ENCODE measurements at regions of chr7 and their contacts with region 1.

Region 1: DNA sequence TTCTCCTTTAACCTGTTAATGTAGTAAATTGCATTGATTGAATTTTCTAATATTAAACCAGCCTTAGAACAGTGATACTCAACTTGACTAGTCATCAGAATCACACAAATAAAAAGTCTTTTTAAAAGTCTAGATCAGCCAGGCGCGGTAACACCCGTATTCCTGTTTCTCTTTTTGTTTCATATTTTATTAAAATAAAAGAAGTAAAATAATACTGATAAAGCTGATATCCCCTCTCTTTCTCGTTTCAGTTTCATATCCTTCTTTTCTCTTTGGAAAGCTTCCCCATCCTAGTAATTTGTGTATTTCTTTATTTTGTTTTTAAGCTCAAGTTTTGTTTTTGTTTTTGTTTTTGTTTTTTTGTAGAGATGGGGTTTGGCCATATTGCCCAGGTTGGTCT is 9.3 kb downstream of the SMO start:
- DNase-seq: no peak
- H3K4me3 ChIP-seq: no peak overlapping the region
- H3K27ac ChIP-seq: no peak overlapping the region
- H3K4me1 ChIP-seq: no peaks in the 10 kb centered on the region
- H3K27me3 ChIP-seq: no peaks in the 10 kb centered on the region
- CTCF ChIP-seq: no peak

Region 2: DNA sequence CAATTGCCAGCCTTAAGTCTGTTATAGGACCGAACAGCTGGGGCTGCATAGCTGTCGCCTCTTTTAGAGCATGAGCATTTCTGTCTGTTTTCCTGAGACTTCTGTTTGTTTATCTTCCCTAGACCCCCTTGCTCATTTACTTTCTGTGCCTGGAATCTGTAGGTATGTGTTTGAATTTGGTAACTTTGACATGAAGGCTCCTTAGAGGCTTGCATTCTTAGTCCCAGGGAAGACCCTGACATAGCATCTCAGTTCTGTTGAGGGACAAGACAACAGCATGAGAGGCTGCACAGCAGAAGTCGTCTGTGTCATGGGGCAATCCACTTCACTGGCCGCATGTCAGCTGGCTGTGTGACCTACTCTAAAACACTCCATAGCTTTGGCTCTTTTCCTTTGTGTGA is 931.2 kb after region 1 on chr7:
- CTCF ChIA-PET with region 1: no interaction called
- POLR2A ChIA-PET with region 1: interaction called, 17 read pairs
- intact Hi-C with region 1: no loop called
- DNase-seq: no peak
- H3K4me3 ChIP-seq: no peak overlapping the region
- H3K27ac ChIP-seq: no peak overlapping the region
- H3K4me1 ChIP-seq: no peaks in the 10 kb centered on the region
- H3K27me3 ChIP-seq: no peaks in the 10 kb centered on the region
- CTCF ChIP-seq: no peak

Measured in PC-9 (cell line).